PC-9 (cell line): ENCODE measurements at regions of chr19 and their contacts with region 1.

Region 1: GRCh38 chr19:42440357-42441048 is 2.2 kb downstream of the CXCL17 start:
- DNase-seq: peak in 1 of 2 experiments; percentile 65
- H3K4me3 ChIP-seq: peak overlapping the region; percentile 16; the same call in 1 of the 2 replicates
- H3K27ac ChIP-seq: peak overlapping the region; percentile 89
- H3K4me1 ChIP-seq: peaks cover 58% of the 10 kb centered on the region
- H3K27me3 ChIP-seq: no peaks in the 10 kb centered on the region
- CTCF ChIP-seq: peak; percentile 89

Region 2: DNA sequence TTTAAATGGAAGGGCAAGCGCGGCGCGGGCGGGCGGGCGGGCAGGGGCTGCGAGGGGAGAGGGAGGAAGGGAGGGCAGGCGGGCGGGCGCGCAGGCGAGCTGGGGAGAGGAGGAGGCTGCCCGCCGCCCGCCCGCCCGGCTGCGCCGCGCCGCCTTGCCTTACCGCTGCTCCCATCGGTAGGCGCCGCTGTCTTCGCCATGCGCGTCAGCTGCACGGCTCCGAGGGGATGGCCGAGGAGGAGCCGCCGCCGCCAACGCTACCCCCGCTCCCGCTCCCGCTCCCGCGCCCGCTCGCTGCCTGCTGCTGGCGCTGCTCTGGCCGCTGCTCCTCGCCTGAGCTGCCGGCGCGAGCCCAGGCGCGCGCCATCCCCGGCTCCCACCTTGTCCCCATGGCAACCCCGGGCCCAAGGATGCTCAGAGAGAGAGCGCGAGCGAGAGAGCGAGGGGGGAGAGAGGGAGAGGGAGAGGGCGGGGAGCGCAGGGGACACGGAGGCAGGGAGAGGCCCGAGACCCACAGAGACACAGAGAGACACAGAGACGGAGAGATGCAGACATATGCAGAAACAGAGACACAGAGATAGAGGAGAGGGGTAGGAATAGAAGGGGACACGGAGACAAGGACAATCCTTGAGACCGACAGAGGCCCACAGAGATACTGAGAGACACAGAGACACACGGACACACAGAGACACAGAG is 263.4 kb before region 1 on chr19:
- CTCF ChIA-PET with region 1: interaction called, 13 read pairs
- POLR2A ChIA-PET with region 1: no interaction called
- intact Hi-C with region 1: no loop called
- DNase-seq: peak; percentile 58 to 75
- H3K4me3 ChIP-seq: peak overlapping the region; percentile 68; the same call in 1 of the 2 replicates
- H3K27ac ChIP-seq: no peak overlapping the region
- H3K4me1 ChIP-seq: peaks cover 10% of the 10 kb centered on the region
- H3K27me3 ChIP-seq: peaks cover 37% of the 10 kb centered on the region
- CTCF ChIP-seq: no peak; the same call in 1 of the 2 replicates

Region 3: GRCh38 chr19:42396381-42397262 is 43.9 kb before region 1 on chr19:
- CTCF ChIA-PET with region 1: interaction called, 10 read pairs
- POLR2A ChIA-PET with region 1: interaction called, 6 read pairs
- intact Hi-C with region 1: no loop called
- DNase-seq: peak; percentile 99 to 100
- H3K4me3 ChIP-seq: peak overlapping the region; percentile 71
- H3K27ac ChIP-seq: peak overlapping the region; percentile 86
- H3K4me1 ChIP-seq: peaks cover 34% of the 10 kb centered on the region
- H3K27me3 ChIP-seq: no peaks in the 10 kb centered on the region
- CTCF ChIP-seq: no peak

Region 4: DNA sequence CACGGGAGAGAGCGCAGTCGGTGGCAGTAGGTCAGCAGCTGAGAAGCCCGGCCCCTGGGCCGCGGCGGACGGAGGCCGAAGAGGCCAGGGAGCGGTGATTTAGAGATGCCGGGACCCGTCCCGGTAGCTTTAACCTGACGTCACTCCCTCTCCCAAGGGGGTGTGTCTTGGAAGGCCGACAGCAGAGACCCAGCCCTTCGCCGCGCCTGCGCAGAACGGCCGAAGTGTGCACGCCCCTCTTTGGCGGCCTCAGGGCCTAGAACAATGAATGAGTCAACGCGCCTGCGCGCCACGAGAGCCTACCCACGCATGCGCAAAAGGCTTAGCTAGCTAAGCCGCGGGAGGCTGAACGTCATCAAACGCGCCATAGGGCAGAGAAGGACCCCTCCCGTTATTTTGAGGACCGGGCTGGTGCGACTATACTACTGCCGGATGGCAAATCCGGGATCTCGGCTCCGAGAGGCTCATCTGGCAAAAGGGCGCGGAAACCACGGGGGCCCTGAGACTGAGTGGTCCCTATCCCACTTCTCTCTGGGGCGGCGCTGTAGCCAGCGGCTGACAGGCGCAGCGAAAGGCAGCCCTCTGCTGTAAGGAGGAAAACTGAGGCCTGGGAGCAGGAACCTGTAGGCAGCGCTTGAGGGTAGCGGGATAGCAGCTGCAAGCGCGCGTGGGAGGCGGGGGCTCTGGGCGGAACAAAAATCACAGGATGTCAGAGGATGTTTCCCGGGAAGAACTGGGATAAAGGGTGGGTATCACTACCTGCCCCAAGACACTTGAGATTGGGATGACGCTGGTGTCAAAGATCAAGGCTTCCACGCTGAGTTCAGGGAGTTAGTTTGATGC is 1155.7 kb after region 1 on chr19 and contains the starts of genes IRGQ and ZNF576:
- CTCF ChIA-PET with region 1: no interaction called
- POLR2A ChIA-PET with region 1: no interaction called
- intact Hi-C with region 1: no loop called
- DNase-seq: peak; percentile 96 to 100
- H3K4me3 ChIP-seq: peak within 1 kb of the TSS; percentile 94
- H3K27ac ChIP-seq: peak within 1 kb of the TSS; percentile 83
- H3K4me1 ChIP-seq: peaks cover 15% of the 10 kb centered on the region
- H3K27me3 ChIP-seq: no peaks in the 10 kb centered on the region
- CTCF ChIP-seq: no peak
- total RNA-seq, gene IRGQ: 23.3 and 31.6 TPM in 2 replicates
- total RNA-seq, gene ZNF576: 15.5 and 16.9 TPM in 2 replicates